Naive thymus-derived CD4-positive, alpha-beta T cell (primary cell): ENCODE measurements at regions of chr15 and their contacts with region 1.

Region 1: DNA sequence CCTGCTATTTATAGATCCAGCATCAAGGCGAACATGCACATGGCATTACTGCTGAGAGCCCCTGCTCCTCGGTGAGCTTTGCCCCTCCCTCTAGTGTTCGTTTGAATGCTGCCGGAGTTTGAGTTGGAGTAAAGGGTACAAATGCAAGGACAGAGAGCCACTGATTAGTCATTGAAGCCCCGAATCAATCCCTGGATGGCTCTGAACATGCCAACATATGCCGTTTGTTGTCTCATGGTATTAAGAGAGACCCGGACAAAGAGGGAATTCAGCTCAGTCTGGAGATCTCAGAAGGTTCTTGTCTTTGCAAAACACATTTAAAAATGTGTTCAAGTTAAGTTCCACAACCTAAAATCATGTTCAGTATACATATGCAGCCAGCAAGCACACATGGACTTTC is 789.2 kb upstream of the NR2F2 start:
- DNase-seq: no peak
- ATAC-seq: no peak
- H3K4me3 ChIP-seq: no peak overlapping the region
- H3K4me3 Mint-ChIP-seq: no peak overlapping the region
- H3K27ac ChIP-seq: no peak overlapping the region
- H3K27ac Mint-ChIP-seq: no peak overlapping the region
- H3K4me1 ChIP-seq: no peaks in the 10 kb centered on the region
- H3K4me1 Mint-ChIP-seq: no peaks in the 10 kb centered on the region
- H3K27me3 ChIP-seq: no peaks in the 10 kb centered on the region
- H3K27me3 Mint-ChIP-seq: peaks cover 2 to 11% (median 5%) of the 10 kb centered on the region in 5 donors

Region 2: DNA sequence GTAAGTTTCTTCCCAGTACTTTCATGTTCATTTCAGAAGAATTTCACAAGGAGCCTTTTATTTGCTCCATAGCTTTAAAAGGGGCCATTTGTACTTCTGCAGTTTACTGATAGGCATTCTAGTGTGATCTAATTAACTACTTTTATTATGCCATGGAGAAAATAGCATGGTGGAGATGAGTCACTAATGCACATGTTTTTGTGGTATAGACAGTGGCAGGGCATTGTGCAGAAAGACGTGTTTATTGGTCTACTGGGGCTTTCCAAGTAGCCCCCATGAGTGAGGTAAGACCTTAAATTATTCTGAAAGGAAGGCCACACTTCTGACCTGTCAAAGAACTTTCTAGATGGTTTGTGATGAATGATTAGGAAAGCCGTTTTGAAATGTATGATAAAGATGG is 20.8 kb before region 1 on chr15:
- CTCF ChIA-PET with region 1: no interaction called
- POLR2A ChIA-PET with region 1: no interaction called
- intact Hi-C with region 1: loop called in 1 of 2 experiments (anchors 2 kb)
- DNase-seq: no peak
- ATAC-seq: no peak
- H3K4me3 ChIP-seq: no peak overlapping the region
- H3K4me3 Mint-ChIP-seq: no peak overlapping the region
- H3K27ac ChIP-seq: no peak overlapping the region
- H3K27ac Mint-ChIP-seq: no peak overlapping the region
- H3K4me1 ChIP-seq: no peaks in the 10 kb centered on the region
- H3K4me1 Mint-ChIP-seq: no peaks in the 10 kb centered on the region
- H3K27me3 ChIP-seq: no peaks in the 10 kb centered on the region
- H3K27me3 Mint-ChIP-seq: peaks cover 2 to 23% (median 10%) of the 10 kb centered on the region in 5 donors